ENCODE measurements at regions of chr12 and their contacts with region 1.

Region 1: GRCh38 chr12:44847888-44848702 is 28.0 kb downstream of the NELL2 start:
- DNase-seq: peak; percentile 52 to 89 (median 87)
- H3K4me3 ChIP-seq: peak overlapping the region; percentile 51
- H3K4me3 Mint-ChIP-seq: peak overlapping the region; percentile 69 to 89 (median 77)
- H3K27ac ChIP-seq: peak overlapping the region; percentile 72
- H3K27ac Mint-ChIP-seq: peak overlapping the region; percentile 93 to 99 (median 96)
- H3K4me1 ChIP-seq: peaks cover 89% of the 10 kb centered on the region
- H3K4me1 Mint-ChIP-seq: peaks cover 76 to 95% (median 94%) of the 10 kb centered on the region in 3 donors
- H3K27me3 ChIP-seq: no peaks in the 10 kb centered on the region
- H3K27me3 Mint-ChIP-seq: peaks cover 0 to 3% of the 10 kb centered on the region in 2 donors

Region 2: DNA sequence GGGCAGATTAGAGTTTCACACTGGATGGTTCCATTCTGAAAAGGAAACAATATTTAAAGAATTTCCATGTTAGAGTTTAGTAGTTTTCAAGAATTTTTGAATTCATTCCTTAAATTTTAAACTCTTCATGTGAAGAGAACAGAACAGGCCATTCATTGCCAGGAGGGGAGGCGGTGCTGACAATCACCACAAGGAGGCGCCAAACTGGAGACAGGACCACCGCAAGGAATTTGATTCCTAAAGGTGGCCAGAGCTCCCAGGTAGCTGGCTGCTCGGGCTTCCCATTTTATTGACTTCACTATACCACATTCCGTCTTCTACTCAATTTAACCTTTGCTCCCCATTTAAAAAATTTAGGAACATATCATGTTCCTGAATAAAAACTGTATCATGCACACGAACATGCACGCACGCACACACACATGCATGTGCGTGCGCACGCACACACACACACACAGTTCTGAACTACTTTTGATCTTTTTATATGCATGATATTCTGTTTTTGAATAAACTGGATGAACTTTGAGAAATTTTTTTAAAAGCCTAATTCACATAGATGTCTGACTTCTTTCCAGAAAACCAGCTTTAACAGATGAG is 73.2 kb before region 1 on chr12:
- CTCF ChIA-PET with region 1: interaction called, 10 read pairs
- POLR2A ChIA-PET with region 1: no interaction called
- DNase-seq: peak; percentile 42 to 72 (median 52)
- H3K4me3 ChIP-seq: no peak overlapping the region
- H3K4me3 Mint-ChIP-seq: no peak overlapping the region
- H3K27ac ChIP-seq: no peak overlapping the region
- H3K27ac Mint-ChIP-seq: no peak overlapping the region
- H3K4me1 ChIP-seq: no peaks in the 10 kb centered on the region
- H3K4me1 Mint-ChIP-seq: peaks cover 3 to 4% (median 4%) of the 10 kb centered on the region in 3 donors
- H3K27me3 ChIP-seq: no peaks in the 10 kb centered on the region
- H3K27me3 Mint-ChIP-seq: peaks cover 0 to 1% of the 10 kb centered on the region in 2 donors

Region 3: GRCh38 chr12:44804068-44804467 is 44.0 kb before region 1 on chr12:
- CTCF ChIA-PET with region 1: no interaction called
- POLR2A ChIA-PET with region 1: no interaction called
- DNase-seq: no peak
- H3K4me3 ChIP-seq: no peak overlapping the region
- H3K4me3 Mint-ChIP-seq: no peak overlapping the region
- H3K27ac ChIP-seq: no peak overlapping the region
- H3K27ac Mint-ChIP-seq: no peak overlapping the region
- H3K4me1 ChIP-seq: no peaks in the 10 kb centered on the region
- H3K4me1 Mint-ChIP-seq: peaks cover 14 to 38% (median 35%) of the 10 kb centered on the region in 3 donors
- H3K27me3 ChIP-seq: no peaks in the 10 kb centered on the region
- H3K27me3 Mint-ChIP-seq: no peaks in the 10 kb centered on the region

Region 4: DNA sequence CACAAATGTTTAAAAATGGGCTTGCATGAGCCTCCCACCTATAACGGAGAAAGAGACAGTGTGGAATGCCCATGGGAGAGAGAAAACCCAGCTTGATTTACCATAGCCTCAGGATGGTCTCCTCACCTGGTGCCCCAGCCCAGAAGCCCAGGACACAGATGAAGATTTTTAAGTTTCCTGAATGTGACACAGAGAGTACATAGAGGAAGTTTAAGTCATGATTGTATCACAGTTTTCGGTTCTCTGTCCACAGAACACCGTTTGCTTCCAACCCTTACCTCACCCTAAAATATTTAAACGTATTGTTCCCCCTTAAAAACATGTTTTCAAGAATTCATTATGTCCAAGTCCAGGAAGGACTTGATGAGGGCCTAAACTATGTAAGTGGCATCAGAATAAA is 28.2 kb before region 1 on chr12:
- CTCF ChIA-PET with region 1: no interaction called
- POLR2A ChIA-PET with region 1: no interaction called
- DNase-seq: no peak
- H3K4me3 ChIP-seq: no peak overlapping the region
- H3K4me3 Mint-ChIP-seq: peak overlapping the region in 6 of 7 donors; percentile 5 to 43 (median 32)
- H3K27ac ChIP-seq: no peak overlapping the region
- H3K27ac Mint-ChIP-seq: peak overlapping the region in 6 of 8 donors; percentile 2 to 71 (median 44)
- H3K4me1 ChIP-seq: peaks cover 50% of the 10 kb centered on the region
- H3K4me1 Mint-ChIP-seq: peaks cover 57 to 84% (median 81%) of the 10 kb centered on the region in 3 donors
- H3K27me3 ChIP-seq: no peaks in the 10 kb centered on the region
- H3K27me3 Mint-ChIP-seq: no peaks in the 10 kb centered on the region

Region 5: GRCh38 chr12:44863867-44864266 is 15.8 kb after region 1 on chr12:
- CTCF ChIA-PET with region 1: interaction called, 3 read pairs
- POLR2A ChIA-PET with region 1: interaction called, 10 read pairs
- DNase-seq: peak in 2 of 5 donors; percentile 53 to 74
- H3K4me3 ChIP-seq: no peak overlapping the region
- H3K4me3 Mint-ChIP-seq: peak overlapping the region in 5 of 7 donors; percentile 1 to 51 (median 35)
- H3K27ac ChIP-seq: no peak overlapping the region
- H3K27ac Mint-ChIP-seq: peak overlapping the region; percentile 12 to 78 (median 42)
- H3K4me1 ChIP-seq: peaks cover 39% of the 10 kb centered on the region
- H3K4me1 Mint-ChIP-seq: peaks cover 50 to 84% (median 73%) of the 10 kb centered on the region in 3 donors
- H3K27me3 ChIP-seq: no peaks in the 10 kb centered on the region
- H3K27me3 Mint-ChIP-seq: peaks cover 0 to 2% of the 10 kb centered on the region in 2 donors